ENCODE measurements at regions of chr16 and their contacts with region 1.

Region 1: GRCh38 chr16:67260426-67261075 is 11.8 kb downstream of the SLC9A5 start:
- DNase-seq: peak; percentile 79
- H3K4me3 Mint-ChIP-seq: no peak overlapping the region
- H3K27ac Mint-ChIP-seq: no peak overlapping the region
- H3K4me1 Mint-ChIP-seq: peaks cover 3% of the 10 kb centered on the region
- H3K27me3 Mint-ChIP-seq: no peaks in the 10 kb centered on the region

Region 2: DNA sequence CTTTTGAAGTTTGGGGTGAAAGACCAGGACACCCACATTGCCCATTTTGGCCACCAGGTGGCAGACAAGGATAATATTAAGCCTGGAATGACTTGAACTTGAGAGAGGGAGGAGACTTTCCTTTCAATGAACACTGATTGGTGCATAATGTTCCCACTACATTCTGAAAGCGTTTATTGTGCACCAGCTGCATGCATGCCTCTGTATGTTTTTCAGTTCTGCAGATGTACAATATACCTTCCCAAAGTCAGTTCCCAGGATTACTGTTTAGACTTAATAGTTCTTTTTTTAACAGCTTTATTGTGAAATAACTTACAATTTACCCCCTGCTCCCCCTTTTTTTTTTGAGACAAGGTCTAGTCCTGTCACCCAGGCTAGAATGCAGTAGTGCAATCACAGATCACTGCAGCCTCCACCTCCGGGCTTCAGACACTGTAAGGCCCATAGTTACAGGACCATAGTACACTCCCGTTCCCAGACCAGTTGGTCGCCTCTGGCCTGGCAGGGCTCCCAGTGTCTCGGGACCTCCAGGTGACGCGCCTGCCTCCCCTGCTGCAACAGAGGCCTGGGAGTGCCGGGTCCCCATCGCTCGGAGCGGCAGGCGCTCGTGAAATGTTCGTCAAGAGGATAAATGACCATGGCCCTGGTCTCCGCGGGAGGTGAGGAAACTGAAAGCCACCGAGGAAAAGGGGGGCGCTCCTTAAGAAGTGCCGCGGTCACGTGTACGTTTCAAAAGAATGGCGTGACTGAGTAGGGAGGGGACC is 313.1 kb before region 1 on chr16:
- intact Hi-C with region 1: no loop called
- DNase-seq: peak; percentile 96
- H3K4me3 Mint-ChIP-seq: peak overlapping the region; percentile 89
- H3K27ac Mint-ChIP-seq: peak overlapping the region; percentile 23
- H3K4me1 Mint-ChIP-seq: peaks cover 18% of the 10 kb centered on the region
- H3K27me3 Mint-ChIP-seq: peaks cover 32% of the 10 kb centered on the region

Region 3: DNA sequence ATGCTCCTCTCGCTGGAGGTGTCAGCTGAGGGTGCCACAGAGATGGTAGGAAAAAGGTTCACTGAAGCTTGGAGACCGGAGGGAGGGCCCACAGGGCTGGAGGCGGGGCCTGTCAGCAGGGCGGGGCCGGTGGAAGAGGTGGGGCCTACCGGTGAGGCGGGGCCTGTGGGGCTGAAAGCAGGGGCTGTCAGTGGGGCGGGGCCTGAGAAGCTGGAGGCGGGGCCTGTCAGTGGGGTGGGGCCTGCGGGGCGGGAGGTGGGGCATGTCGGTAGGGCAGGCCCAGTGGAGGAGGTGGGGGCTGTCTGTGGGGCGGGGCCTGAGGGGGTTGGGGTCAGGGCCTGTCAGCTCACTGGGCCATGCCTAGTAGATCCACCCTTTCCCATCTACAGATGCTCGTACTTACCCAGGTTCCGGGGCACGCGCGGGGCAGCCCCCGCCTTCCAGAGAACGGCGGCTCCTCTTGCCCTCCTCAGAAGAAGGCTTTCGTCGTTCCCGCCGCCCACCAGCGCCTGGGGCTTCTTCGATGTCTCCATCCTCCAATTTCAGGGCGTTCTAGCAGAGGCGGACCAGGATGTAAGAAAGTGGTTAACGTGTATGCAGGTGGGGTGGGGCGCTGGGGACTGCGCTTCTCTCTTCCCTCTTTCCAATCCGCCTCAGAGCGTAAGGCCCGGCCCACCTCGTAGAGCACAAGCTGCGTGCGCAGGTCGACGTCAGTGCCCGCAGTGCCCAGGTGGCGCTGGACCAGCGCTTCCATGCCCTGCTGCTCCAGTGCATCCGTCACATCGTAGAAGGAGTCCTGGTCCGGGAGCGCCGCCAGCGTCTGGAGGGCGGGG is 23.8 kb before region 1 on chr16:
- intact Hi-C with region 1: no loop called
- DNase-seq: peak; percentile 95
- H3K4me3 Mint-ChIP-seq: peak overlapping the region; percentile 58
- H3K27ac Mint-ChIP-seq: peak overlapping the region; percentile 90
- H3K4me1 Mint-ChIP-seq: peaks cover 13% of the 10 kb centered on the region
- H3K27me3 Mint-ChIP-seq: no peaks in the 10 kb centered on the region

Region 4: DNA sequence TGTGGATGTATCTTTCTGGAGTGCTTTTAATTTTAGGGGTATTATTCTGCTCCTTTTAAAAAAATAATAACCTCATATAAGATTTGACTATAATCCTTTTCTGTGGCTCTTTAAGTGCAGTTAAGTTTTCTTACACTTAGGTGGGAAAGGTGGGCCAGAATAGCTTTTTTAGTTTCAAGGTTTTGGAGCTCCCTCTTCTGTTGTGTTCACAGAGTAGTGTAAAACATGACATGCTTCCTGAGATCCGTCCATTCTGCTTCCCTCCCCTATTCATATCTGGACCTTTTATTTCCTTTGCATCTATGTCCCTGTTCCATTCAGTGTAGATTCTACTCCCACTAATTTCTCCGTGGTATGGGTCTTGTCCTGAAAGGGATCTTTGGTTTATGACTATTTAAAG is 78.9 kb after region 1 on chr16:
- intact Hi-C with region 1: loop called (anchors 1 kb)
- DNase-seq: no peak
- H3K4me3 Mint-ChIP-seq: no peak overlapping the region
- H3K27ac Mint-ChIP-seq: no peak overlapping the region
- H3K4me1 Mint-ChIP-seq: no peaks in the 10 kb centered on the region
- H3K27me3 Mint-ChIP-seq: peaks cover 8% of the 10 kb centered on the region

Region 5: GRCh38 chr16:67399181-67399733 is 138.7 kb after region 1 on chr16:
- intact Hi-C with region 1: loop called (anchors 1 kb)
- DNase-seq: peak; percentile 87
- H3K4me3 Mint-ChIP-seq: no peak overlapping the region
- H3K27ac Mint-ChIP-seq: no peak overlapping the region
- H3K4me1 Mint-ChIP-seq: peaks cover under 1% of the 10 kb centered on the region
- H3K27me3 Mint-ChIP-seq: peaks cover 18% of the 10 kb centered on the region

Region 6: GRCh38 chr16:67415872-67416793 is 155.6 kb after region 1 on chr16 and contains the start of gene ZDHHC1:
- intact Hi-C with region 1: loop called (anchors 5 kb)
- DNase-seq: peak; percentile 87
- H3K4me3 Mint-ChIP-seq: peak within 1 kb of the TSS; percentile 76
- H3K27ac Mint-ChIP-seq: peak within 1 kb of the TSS; percentile 12
- H3K4me1 Mint-ChIP-seq: peaks cover 10% of the 10 kb centered on the region
- H3K27me3 Mint-ChIP-seq: peaks cover 36% of the 10 kb centered on the region
- total RNA-seq, gene ZDHHC1: 0.54 and 0.85 TPM in 2 replicates